Heart right ventricle (tissue), 16 donors: ENCODE measurements at regions of chr7 and their contacts with region 1.

Region 1: DNA sequence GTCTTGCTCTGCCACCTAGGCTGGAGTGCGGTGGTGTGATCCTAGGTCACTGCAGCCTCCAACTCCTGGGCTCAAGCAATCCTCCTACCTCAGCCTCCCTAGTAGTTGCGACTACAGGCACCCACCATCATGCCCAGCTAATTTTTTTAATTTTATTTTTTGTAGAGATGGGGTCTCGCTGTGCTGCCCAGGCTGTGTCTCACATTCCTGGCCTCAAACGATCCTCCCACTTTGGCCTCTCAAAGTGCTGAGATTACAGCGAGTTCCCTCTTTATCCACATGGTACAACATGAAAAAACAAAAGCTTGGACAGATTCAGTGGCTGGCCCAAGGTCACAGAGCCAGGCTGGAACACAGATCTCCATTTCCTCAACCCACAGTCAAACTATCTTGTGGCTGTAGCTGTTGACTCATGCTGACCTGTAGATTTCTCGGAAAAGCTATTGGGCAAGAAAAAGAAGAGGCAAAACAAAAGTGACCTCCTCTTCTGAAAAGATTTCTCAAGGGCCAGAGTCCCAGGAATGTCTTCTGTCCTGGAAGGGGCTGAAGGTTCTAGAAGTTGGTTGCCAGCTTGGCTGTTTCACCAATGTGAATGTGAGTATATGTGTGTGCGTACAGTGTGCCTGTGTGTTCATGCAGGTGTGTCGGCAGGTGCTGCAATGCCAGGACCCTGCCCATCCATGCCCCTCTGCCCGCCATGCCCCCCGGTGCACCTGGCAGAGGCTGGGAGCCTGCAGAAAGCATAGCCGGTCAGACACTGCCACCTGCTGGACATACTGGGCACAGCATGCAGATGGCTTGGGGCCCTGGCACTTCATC is 28.4 kb downstream of the TMEM130 start:
- DNase-seq: peak; percentile 38 to 68
- ATAC-seq: peak; percentile 32 to 78 (median 69)
- H3K4me3 ChIP-seq: no peak overlapping the region
- H3K27ac ChIP-seq: no peak overlapping the region
- H3K4me1 ChIP-seq: peaks cover 0 to 6% (median 0%) of the 10 kb centered on the region in 9 donors
- H3K27me3 ChIP-seq: peaks cover 0 to 11% (median 2%) of the 10 kb centered on the region in 7 donors
- CTCF ChIP-seq: peak; percentile 93 to 99 (median 97)

Region 2: DNA sequence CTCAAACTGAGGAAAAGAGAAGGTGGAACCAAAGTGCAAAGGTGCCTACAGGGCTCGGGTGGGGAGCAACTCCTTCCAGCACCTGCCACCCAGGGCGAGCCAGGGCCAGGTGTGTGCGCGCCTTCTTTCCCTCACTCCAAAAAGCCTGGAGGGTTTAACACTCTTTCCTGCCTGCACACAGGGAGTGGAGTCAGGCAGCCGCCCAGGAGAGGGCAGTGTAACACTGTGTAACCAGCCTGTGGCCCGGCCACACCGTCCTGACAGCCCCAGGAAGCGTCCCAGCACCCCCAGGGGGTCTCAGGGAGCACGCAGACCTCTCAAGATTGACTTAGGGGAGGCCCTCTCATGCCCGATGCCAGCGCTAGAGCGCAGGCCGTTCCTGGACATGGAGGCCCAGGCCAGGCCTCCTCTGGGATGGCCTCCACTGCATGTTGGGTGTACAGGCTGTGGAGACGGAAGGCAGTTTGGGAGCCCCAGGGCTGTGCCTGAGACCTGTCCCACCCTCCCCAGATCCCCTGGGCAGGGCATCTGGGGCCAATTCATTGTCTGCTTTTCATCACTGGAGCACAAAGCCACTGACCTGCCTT is 546.5 kb before region 1 on chr7:
- intact Hi-C with region 1: loop called in 2 of 10 experiments (anchors 10 kb)
- DNase-seq: peak; percentile 41 to 48
- ATAC-seq: peak; percentile 55 to 82 (median 73)
- H3K4me3 ChIP-seq: no peak overlapping the region
- H3K27ac ChIP-seq: peak overlapping the region in 1 of 10 donors; percentile 7
- H3K4me1 ChIP-seq: peaks cover 0 to 26% (median 14%) of the 10 kb centered on the region in 9 donors
- H3K27me3 ChIP-seq: no peaks in the 10 kb centered on the region
- CTCF ChIP-seq: peak; percentile 45 to 72 (median 64)

Region 3: DNA sequence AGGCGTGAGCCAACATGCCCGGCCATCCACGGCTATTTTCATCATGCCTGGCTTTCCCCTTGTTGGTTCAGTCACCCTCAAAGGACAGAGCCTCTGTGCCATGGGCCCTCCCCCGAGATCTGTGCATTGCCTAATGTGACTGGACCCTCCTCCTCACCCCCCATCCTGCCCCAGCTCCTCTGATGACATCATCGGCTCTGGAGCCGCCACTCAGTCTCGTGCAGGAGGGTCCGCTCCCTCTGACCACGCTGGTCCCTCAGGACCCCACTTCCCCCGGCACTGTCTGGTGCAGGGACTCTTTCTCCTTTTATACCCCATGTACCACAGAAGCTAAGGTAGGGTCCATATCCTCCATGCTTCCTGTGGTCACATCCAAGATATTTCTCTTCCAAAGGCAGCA is 407.3 kb before region 1 on chr7:
- intact Hi-C with region 1: loop called (anchors 1 to 5 kb)
- DNase-seq: no peak
- ATAC-seq: no peak
- H3K4me3 ChIP-seq: no peak overlapping the region
- H3K27ac ChIP-seq: no peak overlapping the region
- H3K4me1 ChIP-seq: no peaks in the 10 kb centered on the region
- H3K27me3 ChIP-seq: peaks cover 0 to 6% (median 0%) of the 10 kb centered on the region in 7 donors
- CTCF ChIP-seq: no peak

Region 4: DNA sequence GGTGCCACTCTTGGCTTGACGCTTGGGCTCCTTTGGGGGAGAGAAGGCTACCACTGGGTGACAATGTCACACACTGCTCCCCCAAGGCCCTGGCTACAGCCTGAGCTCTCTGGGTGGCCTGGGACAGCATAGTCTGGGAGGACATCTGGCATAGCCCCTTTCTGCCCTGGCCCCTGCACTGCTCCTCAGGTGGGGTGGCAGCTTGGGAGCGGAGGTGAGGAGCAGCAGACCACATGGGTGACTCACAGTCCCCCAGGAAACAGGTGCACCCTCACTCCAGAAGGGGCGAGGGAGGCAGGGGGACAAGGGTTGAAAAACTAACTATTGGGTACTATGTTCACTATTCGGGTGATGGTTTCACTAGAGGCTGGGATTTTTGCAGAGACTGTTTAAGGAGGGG is 179.1 kb before region 1 on chr7:
- intact Hi-C with region 1: no loop called
- DNase-seq: no peak
- ATAC-seq: no peak
- H3K4me3 ChIP-seq: no peak overlapping the region
- H3K27ac ChIP-seq: no peak overlapping the region
- H3K4me1 ChIP-seq: no peaks in the 10 kb centered on the region
- H3K27me3 ChIP-seq: peaks cover 0 to 17% (median 4%) of the 10 kb centered on the region in 7 donors
- CTCF ChIP-seq: no peak

Region 5: DNA sequence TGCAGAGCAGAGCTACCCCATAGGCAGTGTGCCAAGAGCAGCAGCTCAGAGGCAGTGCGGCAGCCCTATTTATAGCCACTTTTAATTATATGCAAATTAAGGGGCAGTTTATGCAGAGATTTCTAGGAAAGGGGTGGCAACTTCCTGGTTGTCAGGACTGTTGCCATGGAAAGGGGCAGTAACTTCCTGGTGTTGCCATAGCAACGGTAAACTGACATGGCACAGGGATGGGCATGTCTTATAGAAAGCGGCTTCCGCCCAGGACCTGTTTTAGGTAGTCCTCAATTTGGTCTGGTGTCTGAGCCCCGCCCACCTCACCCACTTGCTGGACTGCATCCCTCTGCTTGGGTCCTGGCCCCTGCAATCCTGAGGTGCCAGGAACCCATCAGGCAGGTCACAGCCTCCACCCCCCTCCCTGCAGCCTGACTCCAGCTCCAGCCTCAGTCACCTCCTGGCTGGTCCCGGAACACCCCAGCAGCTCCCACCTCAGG is 87.4 kb before region 1 on chr7:
- intact Hi-C with region 1: loop called in 9 of 10 experiments (anchors 1 to 5 kb)
- DNase-seq: no peak
- ATAC-seq: peak in 4 of 8 donors; percentile 25 to 43 (median 34)
- H3K4me3 ChIP-seq: no peak overlapping the region
- H3K27ac ChIP-seq: no peak overlapping the region
- H3K4me1 ChIP-seq: no peaks in the 10 kb centered on the region
- H3K27me3 ChIP-seq: peaks cover 0 to 12% (median 0%) of the 10 kb centered on the region in 7 donors
- CTCF ChIP-seq: no peak

Region 6: GRCh38 chr7:98771519-98771918 is 69.9 kb before region 1 on chr7:
- intact Hi-C with region 1: no loop called
- DNase-seq: peak; percentile 17 to 26
- ATAC-seq: peak in 7 of 8 donors; percentile 11 to 58 (median 42)
- H3K4me3 ChIP-seq: no peak overlapping the region
- H3K27ac ChIP-seq: no peak overlapping the region
- H3K4me1 ChIP-seq: no peaks in the 10 kb centered on the region
- H3K27me3 ChIP-seq: peaks cover 0 to 6% (median 0%) of the 10 kb centered on the region in 7 donors
- CTCF ChIP-seq: no peak